Upper lobe of right lung (tissue), 1 donor: ENCODE measurements at regions of chr3 and their contacts with region 1.

Region 1: DNA sequence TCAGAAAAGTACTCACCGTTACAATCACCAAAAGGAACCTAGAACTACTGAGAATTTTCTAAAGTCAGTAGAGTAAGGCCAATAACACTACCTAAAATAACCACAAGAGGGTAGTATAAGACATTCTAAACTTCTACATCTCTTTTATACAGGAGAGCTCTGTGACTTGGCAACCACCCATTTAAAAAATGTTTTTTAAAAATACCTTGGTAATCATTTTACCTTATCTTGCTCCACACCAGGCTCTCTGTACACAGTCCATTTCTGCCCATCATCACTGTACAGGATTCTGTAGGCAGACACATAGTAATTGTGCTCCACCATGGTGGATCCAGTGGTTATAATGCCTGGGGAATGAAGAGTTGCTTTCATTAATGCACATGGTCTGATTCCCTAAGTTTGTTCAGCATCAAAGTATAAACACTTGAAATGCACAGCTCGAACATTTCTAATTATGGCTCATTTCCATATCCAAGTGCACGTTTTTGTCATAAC is 54.5 kb downstream of the ST3GAL6 start:
- DNase-seq: no peak
- ATAC-seq: peak; percentile 87
- H3K4me3 ChIP-seq: no peak overlapping the region
- H3K27ac ChIP-seq: no peak overlapping the region
- H3K4me1 ChIP-seq: no peaks in the 10 kb centered on the region
- H3K27me3 ChIP-seq: no peaks in the 10 kb centered on the region
- CTCF ChIP-seq: peak; percentile 87

Region 2: GRCh38 chr3:98692787-98693473 is 124.7 kb before region 1 on chr3:
- intact Hi-C with region 1: no loop called
- DNase-seq: no peak
- ATAC-seq: peak; percentile 57
- H3K4me3 ChIP-seq: no peak overlapping the region
- H3K27ac ChIP-seq: no peak overlapping the region
- H3K4me1 ChIP-seq: no peaks in the 10 kb centered on the region
- H3K27me3 ChIP-seq: no peaks in the 10 kb centered on the region
- CTCF ChIP-seq: no peak

Region 3: DNA sequence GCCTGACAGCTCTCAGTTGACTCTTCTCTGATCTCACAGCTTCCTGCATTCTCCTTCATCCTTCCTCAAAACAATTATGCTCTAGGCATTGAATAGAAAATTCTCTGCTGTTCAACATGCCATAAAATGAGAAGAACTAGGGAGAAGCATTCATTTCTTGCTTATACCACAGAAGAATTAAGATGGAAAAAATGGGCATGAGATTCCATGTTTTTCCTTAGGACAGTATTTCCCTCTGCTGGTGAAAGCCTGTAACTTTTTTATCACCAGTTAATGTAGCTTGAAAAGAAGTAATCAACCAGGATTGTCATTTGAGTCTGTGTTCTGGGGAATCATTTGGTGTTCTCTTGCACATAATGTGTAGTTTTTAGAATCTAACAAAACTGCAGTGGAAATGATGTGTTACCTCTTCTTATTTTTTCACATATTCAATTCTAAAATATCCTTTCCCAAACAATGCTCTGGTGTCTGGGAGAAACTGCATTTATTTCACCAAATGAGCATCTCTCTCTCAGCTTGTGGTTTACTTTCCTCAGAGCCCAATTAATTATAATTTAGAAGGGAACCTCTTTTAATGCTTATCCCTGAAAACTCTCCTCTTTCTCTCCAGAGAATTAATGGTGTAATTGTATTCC is 176.7 kb after region 1 on chr3:
- intact Hi-C with region 1: loop called (anchors 5 kb)
- DNase-seq: no peak
- ATAC-seq: peak; percentile 58
- H3K4me3 ChIP-seq: no peak overlapping the region
- H3K27ac ChIP-seq: no peak overlapping the region
- H3K4me1 ChIP-seq: no peaks in the 10 kb centered on the region
- H3K27me3 ChIP-seq: no peaks in the 10 kb centered on the region
- CTCF ChIP-seq: peak; percentile 70